Caco-2 (cell line): ENCODE measurements at regions of chr16 and their contacts with region 1.

Region 1: GRCh38 chr16:28277537-28278388 is 14.6 kb upstream of the SBK1 start:
- DNase-seq: peak; percentile 73 to 86
- H3K4me3 ChIP-seq: peak overlapping the region; percentile 36
- H3K4me3 Mint-ChIP-seq: peak overlapping the region; percentile 69
- H3K27ac Mint-ChIP-seq: no peak overlapping the region
- H3K4me1 ChIP-seq: no peaks in the 10 kb centered on the region
- H3K4me1 Mint-ChIP-seq: no peaks in the 10 kb centered on the region
- H3K27me3 ChIP-seq: no peaks in the 10 kb centered on the region
- H3K27me3 Mint-ChIP-seq: peaks cover 24% of the 10 kb centered on the region
- CTCF ChIP-seq: peak; percentile 92 to 96

Region 2: DNA sequence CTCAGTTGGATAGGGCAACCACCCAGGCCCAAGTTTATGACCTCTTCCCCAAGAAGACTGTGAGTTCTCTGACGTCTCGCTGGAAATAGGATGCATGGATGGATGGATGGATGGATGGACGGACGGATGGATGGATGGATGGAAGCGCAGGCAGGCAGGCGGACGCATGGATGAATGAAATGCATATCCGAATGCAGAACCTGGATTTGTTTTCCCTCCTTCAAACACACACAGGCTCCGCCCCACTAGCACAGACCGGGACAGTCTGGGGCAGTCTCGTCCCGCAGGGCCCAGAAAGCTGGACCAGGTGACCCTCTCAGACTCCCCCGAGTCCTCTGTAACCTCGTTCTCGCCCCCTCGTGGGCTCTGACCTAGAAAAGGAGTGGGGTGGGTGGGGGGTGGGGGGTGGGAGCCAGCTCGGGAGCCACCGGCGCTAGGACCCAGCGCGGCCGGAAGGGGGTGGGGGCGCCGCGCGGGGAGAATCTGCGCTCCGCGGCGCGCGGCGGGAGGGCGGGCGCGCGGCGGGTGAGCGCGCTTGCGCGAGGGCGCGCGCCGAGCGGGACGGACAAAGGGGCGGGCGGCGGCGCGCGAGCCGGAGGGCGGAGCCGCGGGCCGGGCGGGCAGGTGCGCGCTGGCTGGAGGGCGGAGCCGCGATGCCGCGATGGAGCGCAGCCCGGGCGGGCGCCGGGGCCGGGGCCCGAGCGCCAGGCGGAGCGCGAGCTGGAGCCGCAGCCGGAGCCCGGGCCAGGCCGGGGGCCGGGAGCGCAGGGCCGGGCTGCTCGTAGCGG is 14.3 kb after region 1 on chr16 and contains the start of gene SBK1:
- CTCF ChIA-PET with region 1: interaction called, 3 read pairs
- POLR2A ChIA-PET with region 1: no interaction called
- intact Hi-C with region 1: loop called (anchors 2 kb)
- DNase-seq: peak; percentile 68 to 87
- H3K4me3 ChIP-seq: peak within 1 kb of the TSS; percentile 67
- H3K4me3 Mint-ChIP-seq: peak within 1 kb of the TSS; percentile 73
- H3K27ac Mint-ChIP-seq: peak within 1 kb of the TSS; percentile 5
- H3K4me1 ChIP-seq: no peaks in the 10 kb centered on the region
- H3K4me1 Mint-ChIP-seq: peaks cover 8% of the 10 kb centered on the region
- H3K27me3 ChIP-seq: no peaks in the 10 kb centered on the region
- H3K27me3 Mint-ChIP-seq: peaks cover 4% of the 10 kb centered on the region
- CTCF ChIP-seq: no peak
- total RNA-seq, gene SBK1: 5.5 and 6.7 TPM in 2 replicates

Region 3: DNA sequence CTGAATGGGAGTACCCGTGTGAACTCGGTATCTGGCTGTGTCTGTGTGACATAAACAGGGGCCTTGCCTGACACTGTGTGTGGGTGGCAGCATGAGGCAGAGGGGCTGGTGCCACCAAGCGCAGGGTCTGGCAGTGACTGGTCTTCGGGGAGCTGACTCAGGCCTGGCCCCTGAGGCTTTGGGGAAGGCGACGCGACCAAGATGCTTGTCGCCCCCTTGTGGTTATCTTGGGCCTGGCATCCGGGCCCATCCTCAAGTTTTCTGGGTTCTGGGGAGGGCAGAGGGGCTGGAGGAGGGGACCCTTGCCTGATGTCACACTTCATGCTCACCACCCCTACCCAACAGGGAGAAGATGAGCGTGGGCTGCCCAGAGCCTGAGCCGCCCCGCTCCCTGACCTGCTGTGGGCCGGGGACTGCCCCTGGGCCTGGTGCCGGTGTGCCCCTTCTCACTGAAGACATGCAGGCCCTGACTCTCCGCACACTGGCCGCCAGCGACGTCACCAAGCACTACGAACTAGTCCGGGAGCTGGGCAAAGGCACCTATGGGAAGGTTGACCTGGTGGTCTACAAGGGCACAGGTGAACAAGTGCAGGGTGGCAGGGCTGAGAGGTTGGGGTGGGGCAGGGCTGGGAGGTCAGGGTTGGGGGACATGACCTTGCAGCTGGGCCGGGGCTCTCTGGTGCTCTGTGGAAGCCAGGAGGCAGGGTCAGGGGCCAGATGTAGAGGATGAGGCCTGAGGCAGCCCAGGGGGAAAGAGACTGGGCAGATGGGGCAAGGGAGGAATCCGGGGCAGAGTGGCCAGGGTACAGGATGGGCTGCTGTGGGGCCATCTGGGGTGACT is 39.5 kb after region 1 on chr16:
- CTCF ChIA-PET with region 1: interaction called, 4 read pairs
- POLR2A ChIA-PET with region 1: no interaction called
- intact Hi-C with region 1: loop called (anchors 1 kb)
- DNase-seq: peak in 1 of 2 experiments; percentile 66
- H3K4me3 ChIP-seq: no peak overlapping the region
- H3K4me3 Mint-ChIP-seq: no peak overlapping the region
- H3K27ac Mint-ChIP-seq: no peak overlapping the region
- H3K4me1 ChIP-seq: no peaks in the 10 kb centered on the region
- H3K4me1 Mint-ChIP-seq: no peaks in the 10 kb centered on the region
- H3K27me3 ChIP-seq: no peaks in the 10 kb centered on the region
- H3K27me3 Mint-ChIP-seq: no peaks in the 10 kb centered on the region
- CTCF ChIP-seq: peak; percentile 71 to 79

Region 4: DNA sequence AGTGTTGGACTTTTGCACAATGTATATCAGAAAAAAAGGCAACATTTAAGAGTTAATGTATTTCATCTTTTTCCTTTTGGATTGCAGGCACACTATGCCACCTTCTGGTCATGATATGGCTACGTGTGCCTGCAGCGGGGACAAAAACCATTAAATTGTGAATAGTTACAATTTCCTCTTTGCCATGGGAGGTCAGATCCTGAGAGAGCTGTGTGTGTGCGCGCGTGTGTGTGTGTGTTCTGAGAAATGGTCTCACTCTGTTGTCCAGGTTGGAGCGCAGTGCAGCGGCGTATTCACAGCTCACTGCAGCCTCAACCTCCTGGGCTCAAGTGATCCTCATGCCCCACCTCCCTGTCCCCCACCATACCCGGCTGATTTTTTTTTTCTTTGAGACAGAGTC is 271.6 kb after region 1 on chr16:
- CTCF ChIA-PET with region 1: no interaction called
- POLR2A ChIA-PET with region 1: no interaction called
- intact Hi-C with region 1: loop called (anchors 2 kb)
- DNase-seq: peak in 1 of 2 experiments; percentile 39
- H3K4me3 ChIP-seq: no peak overlapping the region
- H3K4me3 Mint-ChIP-seq: no peak overlapping the region
- H3K27ac Mint-ChIP-seq: no peak overlapping the region
- H3K4me1 ChIP-seq: no peaks in the 10 kb centered on the region
- H3K4me1 Mint-ChIP-seq: peaks cover under 1% of the 10 kb centered on the region
- H3K27me3 ChIP-seq: no peaks in the 10 kb centered on the region
- H3K27me3 Mint-ChIP-seq: no peaks in the 10 kb centered on the region
- CTCF ChIP-seq: peak; percentile 60 to 67